ENCODE measurements at regions of chr12 and their contacts with region 1.

Region 1: DNA sequence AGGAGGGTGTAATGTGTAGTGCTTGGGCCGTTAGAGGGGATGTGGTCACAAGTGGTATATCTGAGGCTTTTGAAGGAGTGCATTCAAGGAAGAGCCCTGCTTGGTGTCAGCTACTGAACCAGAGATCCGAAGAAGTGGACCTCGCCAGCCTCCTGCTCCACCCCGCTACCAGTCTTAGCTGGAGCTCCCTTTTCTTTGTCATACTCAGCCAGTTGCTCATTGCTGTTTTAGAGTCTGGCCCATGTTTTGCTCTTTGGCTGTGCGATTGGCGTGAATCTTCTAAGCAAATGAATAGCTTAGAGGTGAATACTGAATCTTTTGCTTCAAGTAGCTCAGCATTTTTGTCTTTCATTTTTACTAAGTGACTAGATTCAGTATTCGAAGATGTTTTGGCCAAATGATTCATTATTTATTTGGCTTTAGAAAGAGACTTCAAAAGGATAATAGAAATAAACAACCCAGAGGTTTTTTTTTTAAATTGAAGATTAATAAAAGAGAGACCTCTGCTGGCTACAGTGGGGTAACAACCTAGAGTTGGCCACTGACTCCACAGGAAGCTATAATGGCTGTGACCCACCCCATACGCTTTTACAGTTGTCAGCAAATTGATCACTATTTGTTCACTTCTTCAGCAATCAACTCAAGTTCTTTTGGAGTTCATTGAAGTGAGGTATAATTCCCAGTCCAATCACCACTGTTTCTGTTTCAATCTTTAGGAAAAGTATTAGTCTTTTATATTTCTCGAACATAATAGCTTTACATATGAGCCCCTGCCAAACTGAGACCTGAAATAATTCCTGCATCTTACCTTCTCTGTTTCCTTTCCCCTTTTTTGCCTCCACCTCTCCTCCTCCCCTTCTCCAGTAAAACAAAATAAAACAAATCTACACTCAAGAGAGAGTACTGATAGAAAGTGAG is 19.9 kb downstream of the CDKN1B start:
- DNase-seq: peak; percentile 55
- H3K4me3 Mint-ChIP-seq: peak overlapping the region; percentile 47
- H3K27ac Mint-ChIP-seq: peak overlapping the region; percentile 59
- H3K4me1 Mint-ChIP-seq: peaks cover 27% of the 10 kb centered on the region
- H3K27me3 Mint-ChIP-seq: no peaks in the 10 kb centered on the region

Region 2: DNA sequence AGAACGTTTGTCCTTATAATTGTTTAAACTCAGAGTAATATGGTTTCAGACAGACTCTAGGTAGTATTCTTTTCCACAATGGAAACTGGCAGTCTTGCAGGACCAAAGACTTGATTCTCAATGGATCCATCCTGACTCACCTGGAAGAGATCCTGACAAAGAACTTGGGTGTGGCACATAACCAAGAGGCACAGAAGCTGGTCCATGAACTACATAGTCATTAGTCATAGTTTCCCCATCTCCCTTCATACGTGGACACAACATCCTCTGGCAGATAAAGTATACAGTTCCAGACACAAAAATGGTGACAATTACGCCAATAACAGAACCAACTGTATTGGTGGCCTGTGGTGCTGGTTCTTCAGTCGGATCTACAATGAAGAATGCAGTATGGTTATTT is 610.5 kb before region 1 on chr12:
- CTCF ChIA-PET with region 1: no interaction called
- intact Hi-C with region 1: loop called (anchors 5 kb)
- DNase-seq: no peak
- H3K4me3 Mint-ChIP-seq: no peak overlapping the region
- H3K27ac Mint-ChIP-seq: no peak overlapping the region
- H3K4me1 Mint-ChIP-seq: peaks cover 2% of the 10 kb centered on the region
- H3K27me3 Mint-ChIP-seq: no peaks in the 10 kb centered on the region

Region 3: GRCh38 chr12:12645485-12645884 is 91.5 kb before region 1 on chr12:
- CTCF ChIA-PET with region 1: interaction called, 26 read pairs
- intact Hi-C with region 1: loop called (anchors 1 kb)
- DNase-seq: peak; percentile 38
- H3K4me3 Mint-ChIP-seq: no peak overlapping the region
- H3K27ac Mint-ChIP-seq: peak overlapping the region; percentile 46
- H3K4me1 Mint-ChIP-seq: peaks cover 14% of the 10 kb centered on the region
- H3K27me3 Mint-ChIP-seq: no peaks in the 10 kb centered on the region

Region 4: DNA sequence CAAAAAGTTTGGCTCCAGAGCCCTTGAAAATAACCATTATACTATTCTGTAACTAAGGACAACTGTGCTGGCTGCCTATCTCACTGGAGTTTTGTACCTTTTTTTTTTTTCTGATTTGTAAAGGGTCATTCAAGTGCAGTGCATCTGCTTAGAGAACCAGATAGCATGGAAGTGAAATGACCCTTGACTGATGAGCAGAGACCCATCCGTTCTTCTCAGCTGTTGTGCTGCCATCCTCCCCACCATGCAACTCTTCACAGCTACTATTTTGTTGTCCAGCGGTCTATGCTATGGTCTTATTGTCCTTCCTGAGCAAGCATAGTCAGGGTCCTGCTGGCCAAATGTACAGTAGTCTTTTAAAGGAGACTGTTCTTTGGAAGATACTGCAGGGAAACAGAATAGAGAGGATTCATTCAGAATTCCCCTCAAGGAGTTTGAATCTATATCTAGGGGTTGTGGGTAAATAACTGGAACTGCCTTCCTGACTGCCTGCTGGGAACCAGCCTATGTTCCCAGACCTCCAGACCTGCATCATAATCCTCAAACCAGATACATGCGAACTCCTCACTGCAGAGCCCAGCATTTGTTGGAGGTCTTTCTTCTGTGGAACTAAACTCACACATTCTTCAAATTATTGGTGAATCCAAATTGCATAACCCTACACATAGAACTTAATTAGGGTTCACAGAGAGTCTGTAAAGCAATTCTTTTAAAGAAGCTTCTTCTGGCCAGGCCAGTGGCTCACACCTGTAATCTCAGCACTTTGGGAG is 82.1 kb before region 1 on chr12:
- CTCF ChIA-PET with region 1: interaction called, 14 read pairs
- intact Hi-C with region 1: no loop called
- DNase-seq: no peak
- H3K4me3 Mint-ChIP-seq: no peak overlapping the region
- H3K27ac Mint-ChIP-seq: no peak overlapping the region
- H3K4me1 Mint-ChIP-seq: peaks cover 7% of the 10 kb centered on the region
- H3K27me3 Mint-ChIP-seq: no peaks in the 10 kb centered on the region

Region 5: GRCh38 chr12:12716793-12717585 is 20.0 kb before region 1 on chr12 and contains the start of gene CDKN1B:
- CTCF ChIA-PET with region 1: interaction called, 28 read pairs
- intact Hi-C with region 1: loop called (anchors 1 kb)
- DNase-seq: peak; percentile 90
- H3K4me3 Mint-ChIP-seq: peak within 1 kb of the TSS; percentile 98
- H3K27ac Mint-ChIP-seq: peak within 1 kb of the TSS; percentile 98
- H3K4me1 Mint-ChIP-seq: peaks cover 55% of the 10 kb centered on the region
- H3K27me3 Mint-ChIP-seq: no peaks in the 10 kb centered on the region
- total RNA-seq, gene CDKN1B: 35.9 to 39.1 TPM

Region 6: DNA sequence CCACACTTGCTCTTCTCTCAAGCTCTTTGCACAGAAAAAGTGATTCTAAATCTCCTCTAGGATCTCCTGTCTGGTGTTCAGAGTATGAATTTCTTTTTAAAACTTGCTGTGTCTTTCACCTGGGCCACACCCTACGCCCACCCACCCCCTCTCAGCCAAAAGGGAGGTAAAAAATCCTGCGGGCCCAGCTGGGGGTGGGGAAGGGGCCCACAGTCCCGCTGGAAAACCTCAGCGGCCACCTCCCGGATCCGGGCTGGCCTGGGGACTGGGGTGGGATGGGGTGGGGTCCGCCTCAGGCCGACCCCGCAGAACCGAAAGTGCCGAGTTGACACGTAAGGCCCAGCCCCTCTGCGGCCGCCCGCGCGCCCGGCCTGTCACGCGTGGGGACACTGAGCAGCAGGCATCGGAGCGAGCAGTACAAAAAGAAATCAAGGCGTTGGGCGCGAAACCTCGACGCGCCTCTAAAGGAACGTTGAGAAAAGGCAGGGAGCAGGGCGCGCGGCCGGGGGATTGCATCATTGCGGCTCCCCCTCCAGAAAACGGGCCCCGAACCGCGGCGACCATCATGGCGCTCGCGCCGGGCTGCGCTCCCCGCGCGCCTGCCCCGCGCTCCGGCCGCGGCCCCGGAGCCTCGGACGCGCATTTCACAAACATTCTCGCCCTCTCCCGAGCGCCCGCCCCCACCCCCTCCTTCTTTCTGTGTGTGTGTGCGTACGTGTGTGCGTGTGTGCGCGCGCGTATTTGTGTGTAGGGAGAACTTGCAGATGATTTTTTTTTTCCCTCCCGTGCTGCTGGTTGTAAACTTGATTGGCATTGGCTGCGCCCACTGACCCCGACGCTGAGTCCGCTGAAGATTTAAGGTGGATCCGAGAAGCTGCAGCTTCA is 12.1 kb before region 1 on chr12:
- CTCF ChIA-PET with region 1: interaction called, 31 read pairs
- intact Hi-C with region 1: loop called (anchors 1 kb)
- DNase-seq: peak; percentile 94
- H3K4me3 Mint-ChIP-seq: peak overlapping the region; percentile 85
- H3K27ac Mint-ChIP-seq: peak overlapping the region; percentile 98
- H3K4me1 Mint-ChIP-seq: peaks cover 51% of the 10 kb centered on the region
- H3K27me3 Mint-ChIP-seq: no peaks in the 10 kb centered on the region

Measured in activated naive CD4-positive, alpha-beta T cell treated with anti-CD3 and anti-CD28 coated beads for 36 hours (primary cell).